Prostate gland (tissue), 2 donors: ENCODE measurements at regions of chr14 and their contacts with region 1.

Region 1: GRCh38 chr14:51996148-51996746 is 6.9 kb downstream of the RTRAF start:
- DNase-seq: no peak
- H3K4me3 ChIP-seq: no peak overlapping the region
- H3K27ac ChIP-seq: no peak overlapping the region
- H3K4me1 ChIP-seq: no peaks in the 10 kb centered on the region
- H3K27me3 ChIP-seq: no peaks in the 10 kb centered on the region
- CTCF ChIP-seq: peak in 3 of 4 experiments; percentile 61 to 80 (median 63)
- POLR2A ChIP-seq: no peak

Region 2: DNA sequence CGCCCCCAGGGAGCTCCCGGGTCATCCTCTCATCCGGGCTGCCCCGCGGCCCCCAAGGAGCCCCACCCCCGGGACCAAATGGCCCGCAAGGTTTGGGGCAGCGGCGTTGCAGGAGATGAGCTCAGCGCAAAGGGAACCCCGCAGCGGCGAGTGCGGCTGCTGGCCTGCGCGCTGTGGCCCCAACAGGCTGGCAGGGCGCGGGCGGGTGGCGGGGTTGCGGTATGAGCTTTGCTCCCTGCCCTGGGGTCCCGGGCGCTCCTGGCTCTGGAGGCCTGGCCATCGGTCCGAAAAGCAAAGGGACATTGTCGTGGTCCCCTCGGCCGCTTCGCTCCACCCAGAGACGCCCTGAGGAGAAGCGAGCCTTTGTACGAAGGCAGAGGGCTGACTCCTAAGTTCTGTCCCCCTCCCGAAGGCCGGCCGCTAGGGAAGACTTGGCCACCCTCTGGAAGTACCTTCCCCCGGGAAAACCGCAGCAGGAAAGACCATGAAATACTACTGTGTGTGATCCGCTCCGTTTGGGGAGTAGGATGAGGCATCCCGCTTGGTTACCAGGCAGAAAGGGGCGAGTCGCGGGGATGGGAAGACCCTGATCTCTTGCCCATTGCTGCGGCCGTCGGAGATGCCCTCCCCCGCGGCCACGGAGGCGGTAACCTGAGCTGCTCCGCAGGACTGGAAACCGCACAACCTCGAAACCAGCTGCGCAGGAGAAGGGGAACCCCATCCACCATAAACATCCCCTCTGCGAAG is 73.2 kb after region 1 on chr14:
- intact Hi-C with region 1: loop called (anchors 5 kb)
- DNase-seq: no peak
- H3K4me3 ChIP-seq: peak overlapping the region; percentile 43 to 45
- H3K27ac ChIP-seq: peak overlapping the region; percentile 56 to 59
- H3K4me1 ChIP-seq: no peaks in the 10 kb centered on the region
- H3K27me3 ChIP-seq: no peaks in the 10 kb centered on the region
- CTCF ChIP-seq: no peak
- POLR2A ChIP-seq: no peak

Region 3: GRCh38 chr14:52131640-52132320 is 135.5 kb after region 1 on chr14:
- intact Hi-C with region 1: loop called (anchors 5 kb)
- DNase-seq: peak; percentile 67
- H3K4me3 ChIP-seq: no peak overlapping the region
- H3K27ac ChIP-seq: no peak overlapping the region
- H3K4me1 ChIP-seq: no peaks in the 10 kb centered on the region
- H3K27me3 ChIP-seq: no peaks in the 10 kb centered on the region
- CTCF ChIP-seq: peak in 3 of 4 experiments; percentile 45 to 60 (median 49)
- POLR2A ChIP-seq: no peak

Region 4: DNA sequence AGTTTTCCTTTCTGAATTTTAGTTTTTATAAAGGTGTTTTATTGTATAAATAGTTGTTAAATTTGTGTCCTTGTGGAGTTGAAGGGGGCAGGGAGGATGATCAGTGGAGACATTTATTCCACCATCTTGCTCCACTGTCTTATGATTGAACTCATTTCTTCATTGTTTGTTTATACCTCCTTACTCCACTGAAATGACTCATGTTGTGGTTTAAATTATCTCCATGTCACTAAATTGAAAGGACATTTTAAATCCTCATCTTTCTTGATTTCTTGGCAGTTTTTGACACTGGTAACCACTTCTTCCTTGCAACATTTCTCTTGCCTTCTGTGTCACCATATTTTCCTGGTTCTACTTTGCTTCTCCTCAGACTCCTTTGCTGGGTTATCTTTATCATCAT is 978.2 kb after region 1 on chr14:
- intact Hi-C with region 1: no loop called
- DNase-seq: no peak
- H3K4me3 ChIP-seq: no peak overlapping the region
- H3K27ac ChIP-seq: no peak overlapping the region
- H3K4me1 ChIP-seq: no peaks in the 10 kb centered on the region
- H3K27me3 ChIP-seq: no peaks in the 10 kb centered on the region
- CTCF ChIP-seq: no peak
- POLR2A ChIP-seq: no peak